Activated naive CD4-positive, alpha-beta T cell treated with anti-CD3 and anti-CD28 coated beads for 36 hours (primary cell): ENCODE measurements at regions of chr4 and their contacts with region 1.

Region 1: GRCh38 chr4:109559983-109560686 is at the start of gene MCUB:
- DNase-seq: peak; percentile 94
- H3K4me3 Mint-ChIP-seq: peak within 1 kb of the TSS; percentile 88
- H3K27ac Mint-ChIP-seq: peak within 1 kb of the TSS; percentile 95
- H3K4me1 Mint-ChIP-seq: peaks cover 54% of the 10 kb centered on the region
- H3K27me3 Mint-ChIP-seq: no peaks in the 10 kb centered on the region
- total RNA-seq, gene MCUB: 69.1 to 71.8 TPM

Region 2: DNA sequence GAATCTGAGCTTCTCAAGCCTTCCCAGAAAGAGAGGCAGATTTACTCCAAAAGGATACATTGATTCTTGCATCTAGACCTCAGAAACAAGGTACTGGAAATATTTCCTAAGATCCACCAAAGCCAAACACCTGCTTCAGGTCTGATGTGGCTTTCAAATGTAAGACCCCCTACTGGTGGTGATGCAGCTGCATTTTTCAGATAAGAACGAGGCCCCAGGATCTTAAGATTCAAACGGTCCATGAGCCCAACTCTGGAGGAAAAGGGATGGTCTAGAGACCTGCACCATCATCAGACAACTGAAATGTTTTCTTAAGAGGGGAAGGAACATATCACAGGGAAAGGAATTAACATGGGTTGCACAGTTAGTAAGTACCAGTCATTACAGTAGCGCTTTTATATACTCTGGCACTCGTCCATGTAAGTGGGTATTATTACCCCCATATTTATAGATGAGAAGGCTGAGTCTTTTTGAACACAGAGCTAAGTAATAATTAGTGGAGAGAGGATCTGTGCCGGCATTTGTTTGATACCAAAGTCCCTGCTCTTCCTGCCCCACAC is 1465.1 kb before region 1 on chr4:
- CTCF ChIA-PET with region 1: no interaction called
- intact Hi-C with region 1: loop called (anchors 10 kb)
- DNase-seq: no peak
- H3K4me3 Mint-ChIP-seq: peak overlapping the region; percentile 11
- H3K27ac Mint-ChIP-seq: peak overlapping the region; percentile 96
- H3K4me1 Mint-ChIP-seq: peaks cover 86% of the 10 kb centered on the region
- H3K27me3 Mint-ChIP-seq: no peaks in the 10 kb centered on the region

Region 3: GRCh38 chr4:109433205-109434006 is 126.7 kb before region 1 on chr4 and contains the start of gene SEC24B:
- CTCF ChIA-PET with region 1: interaction called, 3 read pairs
- intact Hi-C with region 1: loop called (anchors 1 kb)
- DNase-seq: peak; percentile 92
- H3K4me3 Mint-ChIP-seq: peak within 1 kb of the TSS; percentile 82
- H3K27ac Mint-ChIP-seq: peak within 1 kb of the TSS; percentile 85
- H3K4me1 Mint-ChIP-seq: peaks cover 62% of the 10 kb centered on the region
- H3K27me3 Mint-ChIP-seq: no peaks in the 10 kb centered on the region
- total RNA-seq, gene SEC24B: 20.6 to 21.1 TPM

Region 4: DNA sequence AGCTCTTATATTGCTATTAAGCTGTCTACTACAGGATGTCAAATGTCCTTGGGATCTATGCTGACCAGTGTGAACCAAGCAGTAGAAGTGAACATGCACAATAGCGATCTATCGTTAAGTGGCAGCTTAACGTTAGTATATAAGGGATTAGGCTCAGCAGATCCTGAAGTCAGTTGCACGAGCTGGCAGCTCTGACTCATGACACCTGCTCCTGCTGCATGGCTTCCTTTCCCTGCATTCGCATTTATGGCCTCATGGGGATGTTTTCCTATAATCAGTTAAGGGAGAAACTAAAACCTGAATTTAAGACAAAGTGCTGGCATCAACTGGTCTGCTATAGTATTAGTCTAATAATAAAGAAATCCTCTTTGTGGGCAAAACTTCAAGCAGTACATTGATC is 12.7 kb before region 1 on chr4:
- CTCF ChIA-PET with region 1: no interaction called
- intact Hi-C with region 1: no loop called
- DNase-seq: no peak
- H3K4me3 Mint-ChIP-seq: no peak overlapping the region
- H3K27ac Mint-ChIP-seq: no peak overlapping the region
- H3K4me1 Mint-ChIP-seq: peaks cover 25% of the 10 kb centered on the region
- H3K27me3 Mint-ChIP-seq: no peaks in the 10 kb centered on the region

Region 5: DNA sequence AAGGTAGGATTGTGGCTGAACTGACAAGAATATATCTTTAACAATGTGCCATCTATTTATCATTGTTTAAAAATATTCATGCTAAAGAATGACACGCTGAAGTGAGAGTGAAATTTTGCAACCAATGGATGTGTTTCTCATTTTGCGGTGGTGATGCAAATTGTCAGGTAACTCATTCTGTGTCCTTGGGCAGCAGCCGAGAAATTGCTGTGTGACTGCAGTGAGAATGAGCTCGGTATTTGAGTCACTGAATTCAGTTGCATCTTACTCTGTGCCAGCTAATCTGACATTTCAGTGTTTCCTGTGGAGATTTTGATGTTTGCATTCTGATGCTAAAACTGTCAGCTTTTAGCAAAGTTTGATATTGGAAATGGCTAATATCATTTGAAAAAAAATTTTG is 28.0 kb after region 1 on chr4:
- CTCF ChIA-PET with region 1: interaction called, 5 read pairs
- intact Hi-C with region 1: loop called (anchors 1 kb)
- DNase-seq: peak; percentile 88
- H3K4me3 Mint-ChIP-seq: peak overlapping the region; percentile 46
- H3K27ac Mint-ChIP-seq: peak overlapping the region; percentile 78
- H3K4me1 Mint-ChIP-seq: peaks cover 85% of the 10 kb centered on the region
- H3K27me3 Mint-ChIP-seq: no peaks in the 10 kb centered on the region

Region 6: GRCh38 chr4:109702950-109703663 is 143.0 kb after region 1 on chr4 and contains the start of gene CASP6:
- CTCF ChIA-PET with region 1: no interaction called
- intact Hi-C with region 1: loop called (anchors 1 kb)
- DNase-seq: peak; percentile 76
- H3K4me3 Mint-ChIP-seq: peak within 1 kb of the TSS; percentile 86
- H3K27ac Mint-ChIP-seq: peak within 1 kb of the TSS; percentile 82
- H3K4me1 Mint-ChIP-seq: peaks cover 28% of the 10 kb centered on the region
- H3K27me3 Mint-ChIP-seq: no peaks in the 10 kb centered on the region
- total RNA-seq, gene CASP6: 11.5 to 12.1 TPM

Region 7: GRCh38 chr4:109815151-109816081 is 255.3 kb after region 1 on chr4 and contains the start of gene GAR1:
- CTCF ChIA-PET with region 1: interaction called, 3 read pairs
- intact Hi-C with region 1: loop called (anchors 1 kb)
- DNase-seq: peak; percentile 93
- H3K4me3 Mint-ChIP-seq: peak within 1 kb of the TSS; percentile 99
- H3K27ac Mint-ChIP-seq: peak within 1 kb of the TSS; percentile 95
- H3K4me1 Mint-ChIP-seq: peaks cover 47% of the 10 kb centered on the region
- H3K27me3 Mint-ChIP-seq: no peaks in the 10 kb centered on the region
- total RNA-seq, gene GAR1: 18.9 to 24.4 TPM

Region 8: DNA sequence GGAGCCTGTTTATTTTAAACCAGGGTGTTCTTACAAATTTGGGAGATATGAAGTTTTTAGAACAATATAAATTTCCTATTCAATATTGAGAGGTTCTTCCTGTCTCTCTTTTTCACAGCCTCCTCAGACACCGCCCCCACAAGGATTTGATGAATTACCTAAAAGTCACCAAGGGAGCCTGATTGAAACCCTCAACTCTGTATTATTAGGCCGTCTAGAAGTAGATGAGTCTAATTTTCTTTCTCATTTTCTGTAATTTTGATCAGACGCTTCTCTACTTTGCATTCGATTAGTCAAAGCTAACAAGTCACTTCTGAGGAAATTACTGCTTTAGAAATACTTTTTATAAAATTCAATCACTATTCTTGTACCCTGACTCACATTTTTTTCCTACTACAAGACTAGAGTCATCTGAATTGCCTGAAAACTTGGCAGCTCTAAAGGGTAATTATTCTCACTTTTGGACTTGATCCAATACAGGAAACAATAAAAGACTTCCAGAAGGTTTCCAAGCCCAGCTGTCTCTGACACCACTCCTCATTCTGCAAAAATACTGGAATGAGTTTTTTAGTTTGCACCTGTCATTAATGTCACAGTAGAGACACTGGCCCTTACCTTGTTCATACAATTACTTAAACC is 527.1 kb after region 1 on chr4:
- CTCF ChIA-PET with region 1: no interaction called
- intact Hi-C with region 1: loop called (anchors 5 kb)
- DNase-seq: no peak
- H3K4me3 Mint-ChIP-seq: no peak overlapping the region
- H3K27ac Mint-ChIP-seq: peak overlapping the region; percentile 18
- H3K4me1 Mint-ChIP-seq: peaks cover 56% of the 10 kb centered on the region
- H3K27me3 Mint-ChIP-seq: no peaks in the 10 kb centered on the region